PC-3 (cell line): ENCODE measurements at regions of chr3 and their contacts with region 1.

Region 1: GRCh38 chr3:10366651-10367101 is 45.8 kb upstream of the SEC13 start:
- DNase-seq: peak; percentile 96
- ATAC-seq: peak; percentile 94
- H3K4me3 ChIP-seq: no peak overlapping the region
- H3K27ac ChIP-seq: peak overlapping the region; percentile 83
- H3K4me1 ChIP-seq: peaks cover 18% of the 10 kb centered on the region
- H3K27me3 ChIP-seq: no peaks in the 10 kb centered on the region
- CTCF ChIP-seq: 0 out of 2 replicates have a peak, but pooled peaks have one; percentile 13

Region 2: DNA sequence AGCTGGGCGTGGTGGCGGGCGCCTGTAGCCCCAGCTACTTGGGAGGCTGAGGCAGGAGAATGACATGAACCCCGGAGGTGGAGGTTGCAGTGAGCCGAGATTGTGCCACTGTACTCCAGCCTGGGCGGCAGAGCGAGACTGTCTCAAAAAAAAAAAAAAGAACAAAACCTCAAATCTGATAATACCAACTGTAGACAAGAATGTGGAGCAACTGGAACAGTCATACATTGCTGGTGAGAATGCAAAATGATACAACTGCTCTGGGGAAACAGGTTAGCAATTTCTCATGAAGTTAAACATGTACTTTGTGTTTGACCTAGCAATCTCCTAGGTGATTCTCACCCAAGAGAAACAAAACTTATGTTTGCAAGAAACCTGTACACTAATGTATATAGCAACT is 229.5 kb before region 1 on chr3:
- CTCF ChIA-PET with region 1: no interaction called
- POLR2A ChIA-PET with region 1: no interaction called
- intact Hi-C with region 1: no loop called
- DNase-seq: peak; percentile 15
- ATAC-seq: no peak
- H3K4me3 ChIP-seq: no peak overlapping the region
- H3K27ac ChIP-seq: no peak overlapping the region
- H3K4me1 ChIP-seq: 0 out of 2 replicates have a peak, but pooled peaks cover 4% of the 10 kb centered on the region
- H3K27me3 ChIP-seq: no peaks in the 10 kb centered on the region
- CTCF ChIP-seq: no peak

Region 3: DNA sequence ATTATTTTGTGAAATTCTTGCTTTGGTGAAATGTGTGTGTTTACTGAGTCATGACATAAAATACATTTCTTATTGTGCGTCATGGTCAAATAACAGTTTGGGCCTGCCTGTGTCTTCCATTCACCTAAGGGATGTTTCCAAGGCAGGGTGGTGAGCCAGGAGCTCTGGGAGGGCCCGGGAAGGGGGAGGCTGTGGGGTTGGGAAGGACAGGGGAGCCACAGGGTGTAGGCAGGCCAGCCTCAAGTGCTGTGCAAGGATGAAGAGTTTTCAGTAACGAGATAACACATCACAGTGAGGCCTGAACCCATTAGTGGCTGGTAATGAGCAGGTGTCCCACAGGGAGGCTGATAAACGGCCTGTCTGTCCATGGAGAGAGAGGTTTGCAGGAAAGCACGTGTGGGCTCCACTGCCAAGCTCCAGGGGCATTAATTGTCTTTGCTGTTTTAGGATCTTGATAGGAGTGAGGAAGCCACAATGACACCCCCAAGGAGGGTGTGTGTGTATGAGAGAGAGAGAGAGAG is 10.2 kb before region 1 on chr3:
- CTCF ChIA-PET with region 1: interaction called, 3 read pairs
- POLR2A ChIA-PET with region 1: interaction called, 9 read pairs
- intact Hi-C with region 1: loop called (anchors 1 kb)
- DNase-seq: peak; percentile 74
- ATAC-seq: peak; percentile 71
- H3K4me3 ChIP-seq: no peak overlapping the region
- H3K27ac ChIP-seq: peak overlapping the region; percentile 80
- H3K4me1 ChIP-seq: peaks cover 48% of the 10 kb centered on the region
- H3K27me3 ChIP-seq: no peaks in the 10 kb centered on the region
- CTCF ChIP-seq: no peak